ENCODE measurements at regions of chr19 and their contacts with region 1.

Region 1: GRCh38 chr19:54102421-54103169 is at the start of gene NDUFA3:
- DNase-seq: peak; percentile 98
- H3K4me3 Mint-ChIP-seq: peak within 1 kb of the TSS; percentile 99
- H3K27ac Mint-ChIP-seq: peak within 1 kb of the TSS; percentile 92
- H3K4me1 Mint-ChIP-seq: peaks cover 28% of the 10 kb centered on the region
- H3K27me3 Mint-ChIP-seq: no peaks in the 10 kb centered on the region
- total RNA-seq, gene NDUFA3: 110 to 120 TPM

Region 2: GRCh38 chr19:54115109-54116063 is 12.8 kb after region 1 on chr19 and contains the starts of genes PRPF31 and TFPT:
- CTCF ChIA-PET with region 1: no interaction called
- intact Hi-C with region 1: loop called (anchors 1 kb)
- DNase-seq: peak; percentile 99
- H3K4me3 Mint-ChIP-seq: peak within 1 kb of the TSS; percentile 90
- H3K27ac Mint-ChIP-seq: peak within 1 kb of the TSS; percentile 97
- H3K4me1 Mint-ChIP-seq: peaks cover 30% of the 10 kb centered on the region
- H3K27me3 Mint-ChIP-seq: no peaks in the 10 kb centered on the region
- total RNA-seq, gene PRPF31: 67.5 to 71.8 TPM
- total RNA-seq, gene TFPT: 17.0 to 17.3 TPM

Region 3: GRCh38 chr19:54137086-54137921 is 34.7 kb after region 1 on chr19 and contains the start of gene CNOT3:
- CTCF ChIA-PET with region 1: no interaction called
- intact Hi-C with region 1: loop called (anchors 1 kb)
- DNase-seq: peak; percentile 100
- H3K4me3 Mint-ChIP-seq: peak within 1 kb of the TSS; percentile 83
- H3K27ac Mint-ChIP-seq: peak within 1 kb of the TSS; percentile 89
- H3K4me1 Mint-ChIP-seq: peaks cover 39% of the 10 kb centered on the region
- H3K27me3 Mint-ChIP-seq: no peaks in the 10 kb centered on the region
- total RNA-seq, gene CNOT3: 50.4 to 58.3 TPM

Measured in activated naive CD4-positive, alpha-beta T cell treated with anti-CD3 and anti-CD28 coated beads for 36 hours (primary cell).